MCF 10A (cell line): ENCODE measurements at regions of chr7 and their contacts with region 1.

Region 1: GRCh38 chr7:140517546-140518369 is 38.5 kb upstream of the MKRN1 start:
- DNase-seq: peak; percentile 91
- H3K4me3 Mint-ChIP-seq: no peak overlapping the region
- H3K27ac Mint-ChIP-seq: no peak overlapping the region
- H3K4me1 Mint-ChIP-seq: peaks cover 6% of the 10 kb centered on the region
- H3K27me3 Mint-ChIP-seq: no peaks in the 10 kb centered on the region
- CTCF ChIP-seq: peak; percentile 81

Region 2: GRCh38 chr7:140534743-140535142 is 17.0 kb after region 1 on chr7:
- CTCF ChIA-PET with region 1: interaction called, 23 read pairs
- POLR2A ChIA-PET with region 1: interaction called, 3 read pairs
- intact Hi-C with region 1: no loop called
- DNase-seq: no peak
- H3K4me3 Mint-ChIP-seq: no peak overlapping the region
- H3K27ac Mint-ChIP-seq: no peak overlapping the region
- H3K4me1 Mint-ChIP-seq: no peaks in the 10 kb centered on the region
- H3K27me3 Mint-ChIP-seq: peaks cover 23% of the 10 kb centered on the region
- CTCF ChIP-seq: no peak

Region 3: GRCh38 chr7:140594131-140594691 is 76.5 kb after region 1 on chr7:
- CTCF ChIA-PET with region 1: interaction called, 4 read pairs
- POLR2A ChIA-PET with region 1: interaction called, 3 read pairs
- intact Hi-C with region 1: loop called (anchors 2 kb)
- DNase-seq: no peak
- H3K4me3 Mint-ChIP-seq: no peak overlapping the region
- H3K27ac Mint-ChIP-seq: no peak overlapping the region
- H3K4me1 Mint-ChIP-seq: peaks cover 18% of the 10 kb centered on the region
- H3K27me3 Mint-ChIP-seq: no peaks in the 10 kb centered on the region
- CTCF ChIP-seq: no peak